Activated B cell treated with CpG ODN at 0.5 μM for 24 hours (primary cell): ENCODE measurements at regions of chr17 and their contacts with region 1.

Region 1: DNA sequence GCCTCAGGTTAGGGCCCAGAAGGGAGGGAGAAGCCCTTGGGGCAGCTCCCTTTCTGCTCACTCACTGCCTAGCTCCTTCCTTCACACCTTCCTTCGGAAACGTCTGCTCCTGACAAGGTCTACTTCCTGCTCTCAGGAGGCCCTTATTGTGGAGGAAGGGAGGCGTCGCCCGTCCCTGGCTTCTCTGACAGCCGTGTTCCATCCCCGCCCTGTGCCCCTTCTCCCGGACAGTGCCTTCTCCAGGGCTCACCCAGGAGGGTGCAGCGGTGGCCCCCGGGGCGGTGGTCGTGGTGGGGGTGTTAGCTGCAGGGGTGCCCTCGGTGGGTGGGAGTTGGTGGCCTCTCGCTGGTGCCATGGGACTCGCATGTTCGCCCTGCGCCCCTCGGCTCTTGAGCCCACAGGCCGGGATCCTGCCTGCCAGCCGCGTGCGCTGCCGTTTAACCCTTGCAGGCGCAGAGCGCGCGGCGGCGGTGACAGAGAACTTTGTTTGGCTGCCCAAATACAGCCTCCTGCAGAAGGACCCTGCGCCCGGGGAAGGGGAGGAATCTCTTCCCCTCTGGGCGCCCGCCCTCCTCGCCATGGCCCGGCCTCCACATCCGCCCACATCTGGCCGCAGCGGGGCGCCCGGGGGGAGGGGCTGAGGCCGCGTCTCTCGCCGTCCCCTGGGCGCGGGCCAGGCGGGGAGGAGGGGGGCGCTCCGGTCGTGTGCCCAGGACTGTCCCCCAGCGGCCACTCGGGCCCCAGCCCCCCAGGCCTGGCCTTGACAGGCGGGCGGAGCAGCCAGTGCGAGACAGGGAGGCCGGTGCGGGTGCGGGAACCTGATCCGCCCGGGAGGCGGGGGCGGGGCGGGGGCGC is 231.9 kb downstream of the SEC14L1 start:
- DNase-seq: peak; percentile 67
- ATAC-seq: peak; percentile 70
- H3K4me3 Mint-ChIP-seq: peak overlapping the region; percentile 70
- H3K27ac Mint-ChIP-seq: no peak overlapping the region
- H3K4me1 Mint-ChIP-seq: peaks cover 46% of the 10 kb centered on the region
- H3K27me3 Mint-ChIP-seq: no peaks in the 10 kb centered on the region
- CTCF ChIP-seq: no peak

Region 2: GRCh38 chr17:77280980-77281903 is 91.4 kb before region 1 on chr17:
- CTCF ChIA-PET with region 1: no interaction called
- POLR2A ChIA-PET with region 1: no interaction called
- intact Hi-C with region 1: loop called (anchors 2 kb)
- DNase-seq: peak; percentile 74
- ATAC-seq: peak; percentile 93
- H3K4me3 Mint-ChIP-seq: peak overlapping the region; percentile 82
- H3K27ac Mint-ChIP-seq: peak overlapping the region; percentile 85
- H3K4me1 Mint-ChIP-seq: peaks cover 30% of the 10 kb centered on the region
- H3K27me3 Mint-ChIP-seq: peaks cover 4% of the 10 kb centered on the region
- CTCF ChIP-seq: no peak

Region 3: GRCh38 chr17:77356109-77356689 is 16.5 kb before region 1 on chr17:
- CTCF ChIA-PET with region 1: no interaction called
- POLR2A ChIA-PET with region 1: no interaction called
- intact Hi-C with region 1: loop called (anchors 2 kb)
- DNase-seq: no peak
- ATAC-seq: peak; percentile 25
- H3K4me3 Mint-ChIP-seq: no peak overlapping the region
- H3K27ac Mint-ChIP-seq: no peak overlapping the region
- H3K4me1 Mint-ChIP-seq: peaks cover 3% of the 10 kb centered on the region
- H3K27me3 Mint-ChIP-seq: no peaks in the 10 kb centered on the region
- CTCF ChIP-seq: no peak

Region 4: GRCh38 chr17:77388384-77389311 is 16.0 kb after region 1 on chr17:
- CTCF ChIA-PET with region 1: no interaction called
- POLR2A ChIA-PET with region 1: interaction called, 8 read pairs
- intact Hi-C with region 1: loop called (anchors 1 kb)
- DNase-seq: no peak
- ATAC-seq: no peak
- H3K4me3 Mint-ChIP-seq: peak overlapping the region; percentile 46
- H3K27ac Mint-ChIP-seq: peak overlapping the region; percentile 80
- H3K4me1 Mint-ChIP-seq: peaks cover 43% of the 10 kb centered on the region
- H3K27me3 Mint-ChIP-seq: no peaks in the 10 kb centered on the region
- CTCF ChIP-seq: no peak

Region 5: DNA sequence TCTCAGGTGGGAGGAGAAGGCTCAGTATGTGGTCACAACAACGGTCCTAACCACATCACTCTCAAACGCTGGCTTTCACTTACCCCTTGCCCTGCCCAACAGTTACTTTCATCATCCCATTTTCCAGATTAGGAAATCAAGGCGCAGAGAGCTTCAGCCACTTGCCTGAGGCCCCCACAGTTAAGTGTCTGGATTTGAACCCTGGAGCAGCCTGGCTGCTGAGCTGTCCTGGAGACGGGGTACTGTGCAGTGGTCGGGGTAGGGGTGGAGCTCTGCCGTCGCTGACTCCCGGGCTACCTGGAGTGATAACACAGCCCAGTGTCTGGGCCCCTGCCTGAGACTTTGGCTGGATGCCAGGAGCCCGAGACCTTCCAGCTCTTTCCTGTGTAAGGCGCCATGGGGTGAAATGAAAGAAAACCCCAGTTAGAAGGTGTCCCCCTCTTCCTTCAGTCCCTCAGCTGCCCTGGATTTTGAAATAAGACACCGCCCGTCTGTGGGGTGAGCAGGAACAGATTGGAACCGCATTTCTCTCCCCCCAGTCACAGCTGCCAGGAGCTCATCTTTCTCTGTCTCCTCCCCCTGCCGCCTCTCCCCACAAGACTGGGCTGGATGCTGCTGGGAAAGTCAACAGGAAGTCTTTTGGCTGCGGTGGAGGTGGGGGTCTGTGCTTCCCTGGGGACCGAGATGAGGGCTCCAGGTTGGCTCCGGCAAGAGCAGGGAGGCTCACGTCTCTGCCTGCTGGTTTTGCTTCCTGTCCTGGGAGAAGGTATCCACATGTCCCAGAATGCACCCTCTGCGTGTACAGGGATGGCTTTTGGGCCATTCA is 48.3 kb after region 1 on chr17:
- CTCF ChIA-PET with region 1: no interaction called
- POLR2A ChIA-PET with region 1: no interaction called
- intact Hi-C with region 1: no loop called
- DNase-seq: no peak
- ATAC-seq: peak; percentile 49
- H3K4me3 Mint-ChIP-seq: peak overlapping the region; percentile 73
- H3K27ac Mint-ChIP-seq: peak overlapping the region; percentile 55
- H3K4me1 Mint-ChIP-seq: peaks cover 33% of the 10 kb centered on the region
- H3K27me3 Mint-ChIP-seq: no peaks in the 10 kb centered on the region
- CTCF ChIP-seq: no peak